ENCODE measurements at regions of chr5 and their contacts with region 1.

Region 1: DNA sequence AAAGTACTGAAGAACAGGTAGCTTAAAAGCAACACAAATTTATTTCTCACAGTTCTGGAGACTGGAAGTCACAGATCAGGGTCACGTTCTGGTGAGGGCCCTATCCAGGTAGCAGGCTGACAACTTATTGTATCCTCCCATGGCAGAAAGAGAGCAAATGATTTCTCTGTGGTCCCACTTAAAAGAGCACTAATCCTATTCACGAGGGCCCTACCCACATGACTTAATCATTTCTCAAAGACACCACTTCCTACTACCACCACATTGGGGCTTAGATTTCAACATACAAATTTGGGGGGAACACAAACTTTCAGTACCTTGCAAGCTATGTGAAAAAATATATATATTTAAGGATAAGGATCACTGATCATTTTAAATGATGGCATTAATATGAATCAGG is 75.8 kb upstream of the PPP1R2B start:
- DNase-seq: no peak
- H3K4me3 ChIP-seq: no peak overlapping the region
- H3K27ac ChIP-seq: no peak overlapping the region
- H3K4me1 ChIP-seq: no peaks in the 10 kb centered on the region
- H3K27me3 ChIP-seq: no peaks in the 10 kb centered on the region
- CTCF ChIP-seq: no peak
- EP300 ChIP-seq: no peak
- POLR2A ChIP-seq: no peak

Region 2: DNA sequence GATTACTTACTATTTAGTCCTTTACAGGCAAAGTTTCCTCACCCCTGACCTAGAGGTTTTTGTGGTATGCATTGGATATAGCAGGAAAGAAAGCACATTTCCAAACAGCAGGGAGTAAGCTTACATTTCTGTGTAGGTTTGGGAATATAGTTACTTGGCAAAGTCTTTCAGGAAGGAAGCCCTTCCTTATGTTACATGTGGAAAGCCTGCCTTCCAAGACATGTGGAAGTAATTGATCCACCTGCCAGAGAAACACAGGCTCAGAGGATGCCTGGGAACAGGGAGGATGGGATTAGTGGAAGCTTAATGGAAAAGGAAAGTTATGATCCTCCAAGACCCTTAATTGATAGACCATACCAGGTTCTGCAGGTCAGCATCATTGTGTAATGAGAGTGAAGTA is 11.5 kb before region 1 on chr5:
- intact Hi-C with region 1: loop called (anchors 1 kb)
- DNase-seq: no peak
- H3K4me3 ChIP-seq: no peak overlapping the region
- H3K27ac ChIP-seq: no peak overlapping the region
- H3K4me1 ChIP-seq: no peaks in the 10 kb centered on the region
- H3K27me3 ChIP-seq: no peaks in the 10 kb centered on the region
- CTCF ChIP-seq: no peak
- EP300 ChIP-seq: no peak
- POLR2A ChIP-seq: no peak

Measured in esophagus muscularis mucosa (tissue), 4 donors.